Naive thymus-derived CD4-positive, alpha-beta T cell (primary cell): ENCODE measurements at regions of chr11 and their contacts with region 1.

Region 1: DNA sequence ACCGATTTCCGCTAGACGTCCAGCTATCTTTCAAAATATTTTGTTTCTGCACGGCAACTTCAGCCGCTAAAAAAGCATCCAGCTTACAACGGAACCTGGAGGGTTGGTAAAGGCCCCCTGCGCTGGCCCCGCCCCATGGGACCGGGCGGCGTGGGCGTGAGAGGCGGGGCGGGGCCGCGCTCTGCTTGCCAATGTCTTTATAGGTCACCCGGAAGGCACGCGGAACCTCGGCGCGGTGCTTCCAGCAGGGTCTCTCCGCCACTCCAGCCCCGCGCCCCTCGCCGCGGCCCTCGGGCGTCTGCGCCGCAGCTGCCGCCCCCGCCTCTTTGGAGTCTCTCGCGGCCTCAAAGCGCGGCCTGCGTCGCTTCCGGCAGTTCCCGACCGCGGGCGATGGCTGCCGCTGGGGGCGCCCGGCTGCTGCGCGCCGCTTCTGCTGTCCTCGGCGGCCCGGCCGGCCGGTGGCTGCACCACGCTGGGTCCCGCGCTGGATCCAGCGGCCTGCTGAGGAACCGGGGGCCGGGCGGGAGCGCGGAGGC is at the start of gene FDX1:
- DNase-seq: peak; percentile 74 to 90 (median 82)
- ATAC-seq: peak; percentile 90
- H3K4me3 ChIP-seq: peak within 1 kb of the TSS; percentile 91
- H3K4me3 Mint-ChIP-seq: peak within 1 kb of the TSS; percentile 88 to 98 (median 98)
- H3K27ac ChIP-seq: peak within 1 kb of the TSS; percentile 87
- H3K27ac Mint-ChIP-seq: peak within 1 kb of the TSS; percentile 92 to 98 (median 97)
- H3K4me1 ChIP-seq: peaks cover 17 to 18% of the 10 kb centered on the region in 2 donors
- H3K4me1 Mint-ChIP-seq: peaks cover 19 to 53% (median 43%) of the 10 kb centered on the region in 7 donors
- H3K27me3 ChIP-seq: no peaks in the 10 kb centered on the region
- H3K27me3 Mint-ChIP-seq: no peaks in the 10 kb centered on the region
- total RNA-seq, gene FDX1: 7.7 to 11.2 (median 10.8) TPM

Region 2: GRCh38 chr11:108593214-108593922 is 1836.4 kb before region 1 on chr11 and contains the start of gene EXPH5:
- CTCF ChIA-PET with region 1: no interaction called
- POLR2A ChIA-PET with region 1: no interaction called
- intact Hi-C with region 1: loop called in 1 of 2 experiments (anchors 2 kb)
- DNase-seq: peak; percentile 62 to 89 (median 87)
- ATAC-seq: peak; percentile 97
- H3K4me3 ChIP-seq: peak within 1 kb of the TSS; percentile 75
- H3K4me3 Mint-ChIP-seq: peak within 1 kb of the TSS; percentile 90 to 100 (median 97)
- H3K27ac ChIP-seq: peak within 1 kb of the TSS; percentile 81
- H3K27ac Mint-ChIP-seq: peak within 1 kb of the TSS; percentile 79 to 98 (median 95)
- H3K4me1 ChIP-seq: peaks cover 0 to 13% of the 10 kb centered on the region in 2 donors
- H3K4me1 Mint-ChIP-seq: peaks cover 12 to 27% (median 22%) of the 10 kb centered on the region in 7 donors
- H3K27me3 ChIP-seq: no peaks in the 10 kb centered on the region
- H3K27me3 Mint-ChIP-seq: peaks cover 0 to 60% (median 0%) of the 10 kb centered on the region in 5 donors
- total RNA-seq, gene EXPH5: 1.9 to 8.3 (median 5.9) TPM

Region 3: GRCh38 chr11:110092515-110093404 is 337.0 kb before region 1 on chr11 and contains the start of gene ZC3H12C:
- CTCF ChIA-PET with region 1: no interaction called
- POLR2A ChIA-PET with region 1: no interaction called
- intact Hi-C with region 1: loop called in 1 of 2 experiments (anchors 5 kb)
- DNase-seq: peak in 2 of 9 donors; percentile 33 to 66
- ATAC-seq: peak; percentile 79
- H3K4me3 ChIP-seq: no peak within 1 kb of the TSS
- H3K4me3 Mint-ChIP-seq: peak within 1 kb of the TSS; percentile 71 to 88 (median 80)
- H3K27ac ChIP-seq: no peak within 1 kb of the TSS
- H3K27ac Mint-ChIP-seq: peak within 1 kb of the TSS in 1 of 9 donors; percentile 86
- H3K4me1 ChIP-seq: peaks cover 0 to 4% of the 10 kb centered on the region in 2 donors
- H3K4me1 Mint-ChIP-seq: peaks cover 5 to 15% (median 11%) of the 10 kb centered on the region in 7 donors
- H3K27me3 ChIP-seq: peaks cover 11 to 14% of the 10 kb centered on the region in 2 donors
- H3K27me3 Mint-ChIP-seq: peaks cover 30 to 61% (median 42%) of the 10 kb centered on the region in 5 donors
- total RNA-seq, gene ZC3H12C: 0.19 to 2.5 (median 0.35) TPM

Region 4: DNA sequence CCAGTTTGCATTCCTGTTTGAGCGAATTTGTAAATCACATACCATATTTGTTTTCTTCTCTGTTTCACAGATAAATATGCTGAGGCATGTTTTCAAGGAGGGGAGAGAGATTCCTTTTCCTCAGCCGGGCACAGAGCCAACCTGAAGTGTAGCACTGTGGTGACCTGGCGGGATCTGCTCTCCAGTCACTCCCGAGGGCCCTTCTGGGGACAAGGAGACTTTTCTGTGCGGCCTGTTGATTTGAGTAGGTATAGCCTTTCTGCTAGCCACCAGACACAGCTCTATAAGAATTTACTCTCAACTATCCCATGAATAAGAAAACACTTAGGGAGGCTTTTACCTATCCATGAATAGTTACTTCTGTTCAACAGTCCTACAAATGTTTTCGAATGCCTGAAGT is 63.5 kb before region 1 on chr11:
- CTCF ChIA-PET with region 1: no interaction called
- POLR2A ChIA-PET with region 1: interaction called, 3 read pairs
- intact Hi-C with region 1: loop called in 1 of 2 experiments (anchors 2 kb)
- DNase-seq: no peak
- ATAC-seq: no peak
- H3K4me3 ChIP-seq: no peak overlapping the region
- H3K4me3 Mint-ChIP-seq: no peak overlapping the region
- H3K27ac ChIP-seq: no peak overlapping the region
- H3K27ac Mint-ChIP-seq: no peak overlapping the region
- H3K4me1 ChIP-seq: no peaks in the 10 kb centered on the region
- H3K4me1 Mint-ChIP-seq: peaks cover 0 to 15% (median 0%) of the 10 kb centered on the region in 7 donors
- H3K27me3 ChIP-seq: no peaks in the 10 kb centered on the region
- H3K27me3 Mint-ChIP-seq: peaks cover 0 to 10% (median 0%) of the 10 kb centered on the region in 5 donors

Region 5: DNA sequence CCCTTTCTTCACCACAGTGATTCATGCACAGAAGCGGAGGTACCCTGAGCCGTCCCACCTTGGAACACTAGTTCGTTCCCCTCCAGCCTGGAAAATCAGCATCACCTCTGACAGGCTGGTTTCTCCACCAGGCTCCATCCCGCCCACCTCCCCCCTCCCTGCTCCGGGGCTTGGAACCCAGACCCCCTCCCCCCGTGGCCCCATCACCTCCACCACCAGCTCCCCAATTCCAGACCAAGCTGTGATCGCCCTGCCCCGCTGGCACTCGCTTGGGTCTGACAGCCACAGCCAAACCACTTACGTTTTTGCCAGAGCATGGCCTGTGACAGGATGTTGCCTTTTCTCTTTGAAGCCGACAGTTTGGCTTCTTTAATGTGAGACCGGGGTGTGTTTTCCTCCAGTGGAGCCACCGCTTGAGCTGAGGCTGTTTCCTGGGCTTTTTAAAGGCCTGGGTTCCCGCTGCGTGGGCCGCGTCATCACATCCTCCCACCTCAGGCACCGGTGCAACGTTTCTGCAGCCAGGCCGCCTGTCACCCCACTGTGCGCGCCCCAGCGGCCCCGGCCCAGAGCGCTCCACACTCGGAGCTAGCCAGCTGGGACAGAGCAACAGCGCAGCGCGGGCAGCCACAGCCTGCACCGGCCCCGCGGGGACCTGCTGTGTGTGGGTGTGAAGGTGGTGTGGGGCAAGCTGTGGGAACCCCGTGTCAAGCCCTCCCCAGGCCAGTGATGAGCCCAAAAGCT is 949.2 kb after region 1 on chr11 and contains the start of gene POU2AF1:
- CTCF ChIA-PET with region 1: no interaction called
- POLR2A ChIA-PET with region 1: interaction called, 9 read pairs
- intact Hi-C with region 1: loop called in 1 of 2 experiments (anchors 5 kb)
- DNase-seq: peak; percentile 36 to 87 (median 83)
- ATAC-seq: peak; percentile 91
- H3K4me3 ChIP-seq: peak within 1 kb of the TSS; percentile 39
- H3K4me3 Mint-ChIP-seq: peak within 1 kb of the TSS; percentile 73 to 89 (median 84)
- H3K27ac ChIP-seq: peak within 1 kb of the TSS; percentile 58
- H3K27ac Mint-ChIP-seq: peak within 1 kb of the TSS; percentile 85 to 99 (median 95)
- H3K4me1 ChIP-seq: peaks cover 0 to 19% of the 10 kb centered on the region in 2 donors
- H3K4me1 Mint-ChIP-seq: peaks cover 7 to 50% (median 42%) of the 10 kb centered on the region in 7 donors
- H3K27me3 ChIP-seq: no peaks in the 10 kb centered on the region
- H3K27me3 Mint-ChIP-seq: peaks cover 0 to 3% (median 0%) of the 10 kb centered on the region in 5 donors
- total RNA-seq, gene POU2AF1: 0.57 to 11.3 (median 4.9) TPM

Region 6: DNA sequence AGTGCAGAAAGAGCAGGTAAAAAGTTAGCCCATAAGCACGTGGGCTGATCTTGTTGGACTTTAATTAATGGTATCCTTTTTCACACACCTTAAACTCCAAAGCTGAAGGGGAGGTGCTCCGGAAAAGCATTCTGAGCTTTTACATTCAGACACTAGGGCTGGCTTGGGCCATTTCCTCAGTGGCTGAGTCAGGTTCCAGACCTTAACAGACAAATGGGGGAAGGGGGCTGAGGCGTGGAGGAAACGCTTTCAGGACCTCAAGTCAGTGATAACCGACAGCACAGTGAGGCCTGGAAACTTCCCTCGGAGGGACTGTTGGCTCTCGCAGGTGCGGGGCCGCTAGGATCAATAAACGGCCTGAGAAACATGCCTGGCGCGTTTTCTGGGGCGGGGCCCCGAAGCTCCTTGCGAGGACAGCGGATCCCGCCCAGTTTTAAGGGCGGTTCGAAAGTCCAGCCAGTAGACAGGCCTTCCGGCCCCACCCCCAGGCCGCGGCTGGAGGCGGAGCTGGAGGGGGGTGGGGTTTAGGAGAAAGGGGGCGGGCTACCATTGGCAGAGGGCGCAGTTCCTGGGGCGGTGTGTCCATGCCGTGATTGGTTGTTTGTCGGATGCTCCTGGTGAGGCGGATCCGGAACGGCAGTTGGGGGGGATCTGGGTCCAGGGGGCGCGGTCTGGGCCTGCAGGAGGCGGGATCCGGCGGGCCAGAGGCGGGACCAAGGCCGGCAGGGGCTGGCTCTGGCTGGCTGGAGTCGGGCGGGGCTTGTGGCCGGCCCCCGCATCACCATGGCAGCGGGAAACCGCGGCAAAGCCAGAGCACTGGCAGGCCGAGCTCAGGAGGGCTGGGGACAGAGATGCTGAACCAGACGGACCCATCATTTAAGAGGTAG is 1496.9 kb after region 1 on chr11:
- CTCF ChIA-PET with region 1: no interaction called
- POLR2A ChIA-PET with region 1: no interaction called
- intact Hi-C with region 1: loop called (anchors 2 to 10 kb)
- DNase-seq: peak; percentile 91 to 98 (median 96)
- ATAC-seq: peak; percentile 96
- H3K4me3 ChIP-seq: peak overlapping the region; percentile 61
- H3K4me3 Mint-ChIP-seq: peak overlapping the region; percentile 76 to 91 (median 87)
- H3K27ac ChIP-seq: peak overlapping the region; percentile 76
- H3K27ac Mint-ChIP-seq: peak overlapping the region; percentile 83 to 96 (median 92)
- H3K4me1 ChIP-seq: peaks cover 0 to 5% of the 10 kb centered on the region in 2 donors
- H3K4me1 Mint-ChIP-seq: peaks cover 0 to 19% (median 16%) of the 10 kb centered on the region in 7 donors
- H3K27me3 ChIP-seq: no peaks in the 10 kb centered on the region
- H3K27me3 Mint-ChIP-seq: peaks cover 0 to 5% (median 0%) of the 10 kb centered on the region in 5 donors